ENCODE measurements at regions of chr11 and their contacts with region 1.

Region 1: DNA sequence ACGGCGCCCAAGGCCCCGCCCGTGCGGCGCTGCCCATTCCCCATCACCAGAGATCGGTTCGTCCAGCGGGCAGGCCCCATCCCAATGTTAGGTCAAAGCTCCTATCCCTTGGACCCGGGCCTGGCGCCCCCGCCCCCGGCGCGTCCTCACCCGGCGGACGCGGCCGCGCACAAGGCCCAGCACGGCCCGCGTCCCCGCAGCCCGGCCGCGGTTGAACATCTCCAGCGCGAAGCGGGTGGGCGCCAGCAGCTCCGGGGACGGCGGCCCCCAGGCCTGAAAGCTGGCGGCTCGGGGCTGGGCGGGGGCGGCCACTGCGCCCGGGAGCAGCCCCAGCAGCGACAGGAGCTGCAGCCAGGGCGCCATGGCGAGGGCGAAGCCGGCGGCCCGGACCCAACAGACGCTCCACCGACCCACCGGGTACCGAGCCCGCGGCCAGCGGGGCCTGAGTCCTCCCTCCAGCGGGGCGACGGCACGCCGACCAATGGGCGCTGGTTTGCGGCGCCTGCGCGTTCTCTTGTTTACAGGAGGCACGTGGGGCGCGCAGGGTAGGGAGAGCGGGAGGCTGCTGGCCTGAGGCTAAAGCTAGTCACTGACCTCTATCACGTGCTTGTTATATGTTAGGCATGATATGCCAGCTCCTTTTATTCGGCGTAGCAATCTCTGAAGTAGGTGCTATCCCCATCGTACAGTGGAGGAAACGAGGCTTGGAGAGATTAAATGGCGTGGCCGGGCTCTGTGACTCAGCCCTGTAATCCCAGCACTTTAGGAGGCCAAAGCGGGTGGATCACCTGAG is at the start of gene CTSF:
- DNase-seq: peak; percentile 69
- ATAC-seq: peak; percentile 93
- H3K4me3 Mint-ChIP-seq: peak within 1 kb of the TSS; percentile 62
- H3K27ac Mint-ChIP-seq: no peak within 1 kb of the TSS
- H3K4me1 Mint-ChIP-seq: peaks cover 3% of the 10 kb centered on the region
- H3K27me3 Mint-ChIP-seq: peaks cover 28% of the 10 kb centered on the region
- total RNA-seq, gene CTSF: 0.70 to 0.90 TPM

Region 2: DNA sequence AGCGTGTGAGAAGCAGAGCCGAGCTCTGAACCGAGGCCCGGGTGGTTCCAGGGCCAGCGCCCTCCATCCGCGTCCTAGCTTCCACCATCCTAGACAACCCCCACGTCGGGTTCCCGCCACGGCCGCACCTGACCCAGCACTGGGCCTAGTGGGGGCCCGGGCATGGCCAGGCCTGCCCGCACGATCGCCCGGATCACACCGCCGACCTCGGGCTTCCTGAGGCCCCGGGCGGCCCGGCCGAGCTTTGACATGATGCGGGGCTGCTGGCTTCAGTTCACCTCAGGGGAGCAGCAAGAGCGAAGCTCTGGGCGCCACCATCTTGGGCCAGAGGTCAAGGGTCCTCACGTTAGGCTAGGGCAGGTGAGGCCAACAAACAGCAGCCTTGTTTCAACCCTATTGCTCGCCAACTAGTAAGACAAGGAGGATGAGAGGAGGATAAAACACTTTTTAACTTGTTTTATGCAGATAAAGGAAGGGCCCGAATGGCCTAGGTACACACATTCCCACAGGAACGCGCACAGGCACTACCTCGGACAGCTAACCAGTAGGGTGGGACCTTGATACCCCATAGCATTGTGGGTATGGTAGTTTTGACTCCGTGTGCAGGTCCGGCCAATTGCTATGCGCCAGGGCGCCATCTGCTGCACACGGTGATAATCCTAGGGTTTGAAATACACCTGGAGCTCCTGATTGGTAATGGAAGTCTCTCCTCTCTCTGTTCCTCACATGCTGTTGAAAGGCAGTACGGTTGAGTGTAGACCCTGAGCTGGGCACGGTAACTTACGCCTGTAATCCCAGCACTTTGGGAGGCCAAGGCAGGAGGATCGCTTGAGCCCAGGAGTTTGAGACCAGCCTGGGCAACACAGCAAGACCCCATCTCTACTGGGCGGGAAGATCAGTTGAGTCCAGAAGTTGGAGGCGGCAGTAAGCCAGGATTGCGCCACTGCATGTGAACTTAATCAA is 129.5 kb before region 1 on chr11 and contains the start of gene MRPL11:
- CTCF ChIA-PET with region 1: no interaction called
- POLR2A ChIA-PET with region 1: no interaction called
- DNase-seq: peak; percentile 93
- ATAC-seq: peak; percentile 97
- H3K4me3 Mint-ChIP-seq: peak within 1 kb of the TSS; percentile 91
- H3K27ac Mint-ChIP-seq: peak within 1 kb of the TSS; percentile 98
- H3K4me1 Mint-ChIP-seq: peaks cover 19% of the 10 kb centered on the region
- H3K27me3 Mint-ChIP-seq: no peaks in the 10 kb centered on the region
- total RNA-seq, gene MRPL11: 93.7 to 100 TPM

Region 3: DNA sequence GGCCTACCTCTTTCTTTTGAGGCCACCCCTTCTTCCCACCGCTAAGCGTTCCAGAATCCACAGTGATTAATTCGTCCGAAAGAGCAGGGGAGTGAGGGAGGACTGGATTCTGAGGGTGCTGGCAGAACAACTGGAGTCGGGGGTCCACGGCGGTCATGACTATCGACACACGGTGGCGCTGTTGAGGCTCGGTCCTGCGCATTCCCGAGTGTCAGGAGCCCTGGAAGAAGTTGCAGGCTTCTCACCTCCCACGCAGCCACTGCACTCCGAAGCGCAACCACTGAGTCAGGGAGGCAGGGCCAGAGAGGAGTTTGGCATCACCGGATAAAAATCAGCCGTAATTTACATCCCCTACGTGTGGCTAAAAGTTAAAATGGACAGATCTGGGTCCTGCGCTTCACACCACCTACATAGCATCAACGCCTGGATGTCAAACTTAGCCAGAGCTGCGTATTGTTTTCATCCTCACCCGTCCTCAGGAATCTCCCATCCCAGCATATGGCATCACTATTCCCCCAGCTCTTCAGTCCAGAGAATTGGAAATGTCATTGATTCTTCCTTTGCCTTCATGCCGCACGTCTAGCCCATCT is 10.8 kb after region 1 on chr11:
- CTCF ChIA-PET with region 1: interaction called, 16 read pairs
- POLR2A ChIA-PET with region 1: no interaction called
- DNase-seq: peak; percentile 75
- ATAC-seq: peak; percentile 90
- H3K4me3 Mint-ChIP-seq: no peak overlapping the region
- H3K27ac Mint-ChIP-seq: no peak overlapping the region
- H3K4me1 Mint-ChIP-seq: peaks cover 6% of the 10 kb centered on the region
- H3K27me3 Mint-ChIP-seq: peaks cover 12% of the 10 kb centered on the region

Region 4: GRCh38 chr11:66653123-66653522 is 84.8 kb after region 1 on chr11:
- CTCF ChIA-PET with region 1: no interaction called
- POLR2A ChIA-PET with region 1: no interaction called
- DNase-seq: no peak
- ATAC-seq: no peak
- H3K4me3 Mint-ChIP-seq: no peak overlapping the region
- H3K27ac Mint-ChIP-seq: no peak overlapping the region
- H3K4me1 Mint-ChIP-seq: peaks cover 3% of the 10 kb centered on the region
- H3K27me3 Mint-ChIP-seq: no peaks in the 10 kb centered on the region

Measured in activated CD8-positive, alpha-beta T cell treated with anti-CD3 and anti-CD28 coated beads, Interleukin-2, amount 10 ng/mL, durations not matched to agents 7 days and 5 days (primary cell).